PC-3 (cell line): ENCODE measurements at regions of chr5 and their contacts with region 1.

Region 1: DNA sequence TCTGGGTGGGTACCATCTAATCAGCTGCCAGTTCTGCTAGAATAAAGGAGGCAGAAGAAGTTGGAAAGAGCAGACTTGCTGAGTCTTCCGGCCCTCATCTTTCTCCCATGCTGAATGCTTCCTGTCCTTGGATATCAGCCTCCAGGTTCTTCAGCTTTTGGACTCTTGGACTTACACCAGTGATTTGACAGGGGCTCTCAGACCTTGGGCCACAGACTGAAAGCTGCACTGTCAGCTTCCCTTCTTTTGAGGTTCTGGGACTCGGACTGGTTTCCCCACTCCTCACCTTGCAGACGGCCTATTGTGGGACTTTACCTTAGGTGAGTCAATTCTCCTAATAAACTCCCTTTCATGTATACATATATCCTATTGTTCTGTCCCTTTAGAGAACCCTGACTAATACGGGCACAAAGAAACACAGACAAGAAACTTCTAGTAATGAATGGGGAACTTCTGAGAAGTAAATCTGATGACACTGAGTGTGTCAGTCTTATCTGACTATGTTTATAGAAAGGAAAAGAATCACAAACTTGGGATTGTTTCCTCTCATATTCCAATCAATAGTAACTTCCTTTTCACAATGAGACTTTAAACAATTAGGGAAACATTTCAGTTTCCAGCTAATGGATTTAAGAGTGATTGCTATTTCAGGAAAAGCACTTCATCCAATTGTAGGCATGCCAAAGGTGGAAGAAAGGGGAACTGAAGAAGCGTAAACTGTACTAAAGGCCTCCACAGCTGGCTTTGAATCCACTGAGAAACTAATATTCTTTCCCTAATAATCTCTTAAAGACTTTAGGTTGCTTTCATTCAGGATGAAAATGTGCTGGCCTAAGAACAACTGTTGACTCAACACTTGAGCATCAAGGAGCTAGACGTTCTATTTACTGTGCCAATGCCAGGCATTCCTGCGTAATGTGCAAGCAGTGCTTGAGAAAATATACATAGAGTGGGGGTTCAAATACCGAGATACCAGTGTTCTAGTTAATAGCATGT is 127.9 kb upstream of the PTGER4 start:
- DNase-seq: peak; percentile 98
- ATAC-seq: peak; percentile 93
- H3K4me3 ChIP-seq: peak overlapping the region; percentile 44
- H3K27ac ChIP-seq: peak overlapping the region; percentile 92
- H3K4me1 ChIP-seq: peaks cover 41% of the 10 kb centered on the region
- H3K27me3 ChIP-seq: no peaks in the 10 kb centered on the region
- CTCF ChIP-seq: no peak

Region 2: GRCh38 chr5:40518511-40518967 is 33.3 kb before region 1 on chr5:
- CTCF ChIA-PET with region 1: interaction called, 3 read pairs
- POLR2A ChIA-PET with region 1: no interaction called
- intact Hi-C with region 1: loop called (anchors 5 kb)
- DNase-seq: peak; percentile 99
- ATAC-seq: peak; percentile 100
- H3K4me3 ChIP-seq: peak overlapping the region; percentile 8; the same call in 1 of the 2 replicates
- H3K27ac ChIP-seq: peak overlapping the region; percentile 91
- H3K4me1 ChIP-seq: peaks cover 23% of the 10 kb centered on the region
- H3K27me3 ChIP-seq: no peaks in the 10 kb centered on the region
- CTCF ChIP-seq: no peak

Region 3: DNA sequence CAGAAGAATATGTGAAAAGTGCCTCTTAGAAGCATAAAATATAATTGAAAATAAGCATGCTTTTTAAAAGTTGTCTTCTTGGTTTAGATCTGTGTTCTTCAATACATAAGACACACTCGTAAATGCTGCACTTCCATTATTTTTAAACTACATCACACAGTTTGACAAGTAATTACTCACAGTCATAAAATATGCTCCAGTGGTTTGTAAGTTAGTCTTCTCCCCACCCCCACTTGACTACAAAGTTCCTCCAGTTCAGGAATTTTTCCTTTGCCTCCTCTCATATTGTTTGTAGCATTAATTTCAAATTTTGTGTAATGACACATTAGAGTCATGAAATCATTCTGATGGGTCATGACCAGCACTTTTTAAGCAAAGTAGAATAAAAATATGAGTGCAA is 67.6 kb after region 1 on chr5:
- CTCF ChIA-PET with region 1: no interaction called
- POLR2A ChIA-PET with region 1: no interaction called
- intact Hi-C with region 1: loop called (anchors 1 kb)
- DNase-seq: peak; percentile 85
- ATAC-seq: peak; percentile 92
- H3K4me3 ChIP-seq: peak overlapping the region; percentile 1; the same call in 1 of the 2 replicates
- H3K27ac ChIP-seq: peak overlapping the region; percentile 19
- H3K4me1 ChIP-seq: peaks cover 35% of the 10 kb centered on the region
- H3K27me3 ChIP-seq: no peaks in the 10 kb centered on the region
- CTCF ChIP-seq: no peak

Region 4: DNA sequence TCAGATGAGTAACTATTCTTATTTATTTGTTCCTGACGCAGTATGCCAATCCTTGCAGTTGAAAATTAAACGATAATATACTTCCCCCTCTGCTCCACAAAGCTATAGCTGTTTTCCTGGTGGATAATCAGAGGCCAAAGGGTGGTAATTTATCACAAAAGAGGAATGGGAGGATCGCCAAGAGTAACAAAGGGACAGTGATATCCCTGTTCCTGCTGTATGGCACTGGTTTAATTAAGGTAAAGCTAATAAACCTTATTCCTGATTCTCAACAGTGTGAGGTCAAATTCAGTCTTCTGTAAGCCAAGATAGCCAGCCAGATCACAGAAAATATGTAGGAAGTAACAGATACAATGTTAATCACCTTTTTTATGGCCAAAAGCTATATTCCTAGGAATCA is 94.5 kb after region 1 on chr5:
- CTCF ChIA-PET with region 1: no interaction called
- POLR2A ChIA-PET with region 1: no interaction called
- intact Hi-C with region 1: loop called (anchors 1 kb)
- DNase-seq: peak; percentile 33
- ATAC-seq: peak; percentile 51
- H3K4me3 ChIP-seq: no peak overlapping the region
- H3K27ac ChIP-seq: no peak overlapping the region
- H3K4me1 ChIP-seq: peaks cover 10% of the 10 kb centered on the region
- H3K27me3 ChIP-seq: no peaks in the 10 kb centered on the region
- CTCF ChIP-seq: no peak